Aorta (tissue), 5 donors: ENCODE measurements at regions of chr11 and their contacts with region 1.

Region 1: DNA sequence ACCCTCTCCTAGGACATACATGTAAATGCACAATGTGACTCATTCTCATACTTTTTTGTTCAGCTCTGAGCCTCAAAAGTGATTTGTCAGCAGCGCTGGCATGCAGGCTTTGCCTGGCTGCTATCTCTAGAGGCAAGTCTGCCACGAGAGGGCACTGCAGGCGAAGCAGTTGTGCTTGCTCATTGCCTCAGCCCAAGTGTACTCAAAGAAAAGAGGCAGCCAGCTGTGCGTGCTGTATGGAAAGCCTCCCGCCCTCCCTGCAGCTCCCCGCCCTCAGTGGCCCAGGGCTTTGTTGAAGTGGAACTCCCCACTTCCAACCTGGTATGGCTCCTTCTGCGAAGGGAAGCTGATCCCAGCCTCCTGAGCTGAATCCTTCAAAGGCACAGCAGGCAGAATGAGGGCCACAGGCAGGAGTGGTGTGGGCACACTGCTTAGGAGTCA is 16.3 kb downstream of the SDHAF2 start:
- DNase-seq: peak; percentile 95 to 98
- ATAC-seq: peak; percentile 93
- H3K4me3 ChIP-seq: no peak overlapping the region
- H3K27ac ChIP-seq: peak overlapping the region in 1 of 2 donors; percentile 80
- H3K4me1 ChIP-seq: no peaks in the 10 kb centered on the region
- H3K27me3 ChIP-seq: no peaks in the 10 kb centered on the region

Region 2: DNA sequence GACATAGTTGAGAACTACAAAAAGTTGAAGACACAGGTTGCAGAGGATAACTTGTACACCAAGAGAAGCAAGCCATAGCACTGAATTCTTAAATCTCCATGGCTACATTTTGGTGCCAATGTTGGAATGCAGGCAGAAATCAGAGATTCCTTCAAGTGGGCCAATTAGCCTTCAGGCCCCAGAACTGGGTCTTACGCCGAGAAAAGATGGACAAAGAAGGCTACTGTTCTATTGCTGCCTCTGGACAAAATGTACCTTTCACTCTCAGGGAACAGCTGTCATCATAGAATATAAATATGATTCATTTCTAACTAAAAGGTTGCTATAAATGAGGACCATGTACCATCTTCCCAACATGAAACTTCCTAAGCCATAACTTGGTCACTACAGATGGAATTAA is 40.2 kb before region 1 on chr11:
- intact Hi-C with region 1: no loop called
- DNase-seq: no peak
- ATAC-seq: no peak
- H3K4me3 ChIP-seq: no peak overlapping the region
- H3K27ac ChIP-seq: no peak overlapping the region
- H3K4me1 ChIP-seq: no peaks in the 10 kb centered on the region
- H3K27me3 ChIP-seq: no peaks in the 10 kb centered on the region

Region 3: GRCh38 chr11:61516675-61517572 is 70.7 kb after region 1 on chr11:
- intact Hi-C with region 1: loop called (anchors 2 kb)
- DNase-seq: peak in 1 of 2 donors; percentile 84
- ATAC-seq: peak; percentile 68
- H3K4me3 ChIP-seq: no peak overlapping the region
- H3K27ac ChIP-seq: no peak overlapping the region
- H3K4me1 ChIP-seq: no peaks in the 10 kb centered on the region
- H3K27me3 ChIP-seq: no peaks in the 10 kb centered on the region

Region 4: GRCh38 chr11:61639816-61640443 is 193.7 kb after region 1 on chr11:
- intact Hi-C with region 1: loop called in 1 of 2 experiments (anchors 5 kb)
- DNase-seq: no peak
- ATAC-seq: no peak
- H3K4me3 ChIP-seq: no peak overlapping the region
- H3K27ac ChIP-seq: no peak overlapping the region
- H3K4me1 ChIP-seq: no peaks in the 10 kb centered on the region
- H3K27me3 ChIP-seq: no peaks in the 10 kb centered on the region